ENCODE measurements at regions of chr22 and their contacts with region 1.

Region 1: GRCh38 chr22:24951942-24952836 is at the start of gene KIAA1671:
- DNase-seq: peak; percentile 84
- H3K4me3 Mint-ChIP-seq: peak within 1 kb of the TSS; percentile 85
- H3K27ac Mint-ChIP-seq: peak within 1 kb of the TSS; percentile 94
- H3K4me1 Mint-ChIP-seq: peaks cover 45% of the 10 kb centered on the region
- H3K27me3 Mint-ChIP-seq: no peaks in the 10 kb centered on the region
- CTCF ChIP-seq: peak; percentile 99
- total RNA-seq, gene KIAA1671: 61.0 and 68.1 TPM in 2 replicates

Region 2: DNA sequence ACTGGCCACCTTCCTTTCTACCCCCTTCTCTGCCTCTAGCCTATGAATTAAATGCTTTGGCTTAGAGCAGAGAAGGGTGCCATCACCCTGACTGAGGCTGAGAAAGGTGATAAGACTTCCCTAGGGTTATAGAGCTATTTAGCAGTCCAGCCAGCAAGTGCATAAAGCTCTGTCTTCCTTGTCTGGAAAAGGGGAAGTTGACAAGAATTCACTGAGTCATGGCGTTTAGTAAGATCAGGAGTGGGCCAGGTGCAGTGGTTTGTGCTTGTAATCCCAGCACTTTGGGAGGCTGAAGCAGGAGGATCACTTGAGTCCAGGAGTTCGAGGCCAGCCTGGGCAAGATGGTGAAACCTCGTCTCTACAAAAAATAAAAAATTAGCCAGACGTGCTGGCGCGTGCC is 68.8 kb before region 1 on chr22:
- CTCF ChIA-PET with region 1: no interaction called
- POLR2A ChIA-PET with region 1: no interaction called
- intact Hi-C with region 1: no loop called
- DNase-seq: no peak
- H3K4me3 Mint-ChIP-seq: no peak overlapping the region
- H3K27ac Mint-ChIP-seq: no peak overlapping the region
- H3K4me1 Mint-ChIP-seq: no peaks in the 10 kb centered on the region
- H3K27me3 Mint-ChIP-seq: peaks cover 60% of the 10 kb centered on the region
- CTCF ChIP-seq: no peak

Region 3: GRCh38 chr22:24969560-24970301 is 17.5 kb after region 1 on chr22:
- CTCF ChIA-PET with region 1: interaction called, 6 read pairs
- POLR2A ChIA-PET with region 1: interaction called, 50 read pairs
- intact Hi-C with region 1: no loop called
- DNase-seq: peak; percentile 71
- H3K4me3 Mint-ChIP-seq: peak overlapping the region; percentile 30
- H3K27ac Mint-ChIP-seq: peak overlapping the region; percentile 89
- H3K4me1 Mint-ChIP-seq: peaks cover 51% of the 10 kb centered on the region
- H3K27me3 Mint-ChIP-seq: no peaks in the 10 kb centered on the region
- CTCF ChIP-seq: no peak

Region 4: DNA sequence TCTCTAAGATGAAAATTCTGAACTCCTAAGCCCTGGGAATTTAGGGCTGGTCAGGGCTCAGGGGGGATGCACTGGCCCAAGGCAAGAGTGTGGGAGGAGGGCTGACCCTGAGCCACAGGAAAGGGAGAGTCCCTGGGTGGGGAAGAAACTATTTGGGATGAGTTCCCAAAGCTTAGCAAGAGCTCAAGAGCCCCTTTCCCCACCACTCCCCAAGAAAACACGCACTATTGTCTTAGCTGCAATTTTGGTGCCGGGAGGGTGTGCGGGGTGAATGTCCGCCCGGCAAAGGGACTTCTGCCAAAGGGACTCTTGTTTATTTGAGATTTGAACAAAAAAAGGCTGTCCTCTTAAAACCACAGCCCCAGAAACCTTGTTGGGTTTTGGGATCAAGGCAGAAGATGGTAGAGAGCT is 37.4 kb after region 1 on chr22:
- CTCF ChIA-PET with region 1: interaction called, 10 read pairs
- POLR2A ChIA-PET with region 1: interaction called, 18 read pairs
- intact Hi-C with region 1: loop called (anchors 2 kb)
- DNase-seq: peak; percentile 51
- H3K4me3 Mint-ChIP-seq: peak overlapping the region; percentile 38
- H3K27ac Mint-ChIP-seq: peak overlapping the region; percentile 91
- H3K4me1 Mint-ChIP-seq: peaks cover 56% of the 10 kb centered on the region
- H3K27me3 Mint-ChIP-seq: no peaks in the 10 kb centered on the region
- CTCF ChIP-seq: no peak

Region 5: GRCh38 chr22:25027959-25028840 is 76.0 kb after region 1 on chr22:
- CTCF ChIA-PET with region 1: interaction called, 11 read pairs
- POLR2A ChIA-PET with region 1: interaction called, 8 read pairs
- intact Hi-C with region 1: loop called (anchors 1 kb)
- DNase-seq: no peak
- H3K4me3 Mint-ChIP-seq: no peak overlapping the region
- H3K27ac Mint-ChIP-seq: peak overlapping the region; percentile 79
- H3K4me1 Mint-ChIP-seq: peaks cover 28% of the 10 kb centered on the region
- H3K27me3 Mint-ChIP-seq: no peaks in the 10 kb centered on the region
- CTCF ChIP-seq: peak; percentile 28

Region 6: DNA sequence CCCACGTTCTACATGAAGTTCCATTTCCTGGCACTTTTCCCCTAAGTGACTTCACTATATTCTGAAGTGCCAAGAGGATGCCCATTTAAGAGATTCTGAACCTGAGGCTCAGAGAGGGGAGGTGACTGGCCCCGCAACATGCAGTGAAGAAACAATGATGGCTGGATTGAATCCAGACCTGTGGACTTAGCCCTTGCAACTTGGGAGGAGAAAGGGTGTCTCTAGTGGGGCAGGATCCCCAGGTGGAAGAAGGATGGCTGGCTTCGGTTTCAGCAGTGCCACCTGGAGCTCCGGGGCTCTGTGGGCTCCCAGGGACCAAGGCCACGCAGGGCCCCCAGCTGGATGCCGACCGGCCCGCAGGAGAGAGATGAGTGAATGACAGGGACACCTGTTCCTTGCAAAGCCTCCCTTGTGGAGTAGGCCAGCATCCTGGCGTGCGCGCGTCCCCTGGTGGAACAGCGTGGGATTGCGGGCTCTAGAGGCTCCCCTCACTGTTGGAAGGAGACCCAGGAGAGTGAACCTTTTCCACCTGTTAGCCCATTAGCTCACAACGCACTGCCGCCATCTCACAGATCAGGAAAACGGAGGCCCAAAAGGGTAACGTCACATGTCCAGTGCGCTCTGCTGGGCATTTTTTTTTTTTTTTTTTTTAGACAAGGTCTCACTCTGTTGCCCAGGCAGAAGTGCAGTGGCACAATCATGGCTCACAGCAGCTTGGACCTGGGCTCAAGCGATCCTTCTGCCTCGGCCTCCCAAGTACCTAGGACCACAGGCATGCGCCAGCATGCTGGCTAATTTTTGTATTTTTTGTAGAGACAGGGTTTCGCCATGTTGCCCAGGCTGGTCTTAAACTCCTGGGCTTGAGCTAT is 105.1 kb after region 1 on chr22:
- CTCF ChIA-PET with region 1: interaction called, 19 read pairs
- POLR2A ChIA-PET with region 1: interaction called, 15 read pairs
- intact Hi-C with region 1: loop called (anchors 1 kb)
- DNase-seq: peak; percentile 65
- H3K4me3 Mint-ChIP-seq: no peak overlapping the region
- H3K27ac Mint-ChIP-seq: no peak overlapping the region
- H3K4me1 Mint-ChIP-seq: peaks cover 8% of the 10 kb centered on the region
- H3K27me3 Mint-ChIP-seq: no peaks in the 10 kb centered on the region
- CTCF ChIP-seq: peak; percentile 82

Region 7: GRCh38 chr22:25156736-25157135 is 204.5 kb after region 1 on chr22:
- CTCF ChIA-PET with region 1: no interaction called
- POLR2A ChIA-PET with region 1: no interaction called
- intact Hi-C with region 1: no loop called
- DNase-seq: no peak
- H3K4me3 Mint-ChIP-seq: no peak overlapping the region
- H3K27ac Mint-ChIP-seq: peak overlapping the region; percentile 31
- H3K4me1 Mint-ChIP-seq: peaks cover 44% of the 10 kb centered on the region
- H3K27me3 Mint-ChIP-seq: no peaks in the 10 kb centered on the region
- CTCF ChIP-seq: no peak